AG04449 (cell line): ENCODE measurements at regions of chr9 and their contacts with region 1.

Region 1: GRCh38 chr9:129006328-129007034 is 21.6 kb downstream of the SH3GLB2 start:
- DNase-seq: no peak
- H3K4me3 ChIP-seq: no peak overlapping the region
- CTCF ChIP-seq: peak; percentile 94

Region 2: DNA sequence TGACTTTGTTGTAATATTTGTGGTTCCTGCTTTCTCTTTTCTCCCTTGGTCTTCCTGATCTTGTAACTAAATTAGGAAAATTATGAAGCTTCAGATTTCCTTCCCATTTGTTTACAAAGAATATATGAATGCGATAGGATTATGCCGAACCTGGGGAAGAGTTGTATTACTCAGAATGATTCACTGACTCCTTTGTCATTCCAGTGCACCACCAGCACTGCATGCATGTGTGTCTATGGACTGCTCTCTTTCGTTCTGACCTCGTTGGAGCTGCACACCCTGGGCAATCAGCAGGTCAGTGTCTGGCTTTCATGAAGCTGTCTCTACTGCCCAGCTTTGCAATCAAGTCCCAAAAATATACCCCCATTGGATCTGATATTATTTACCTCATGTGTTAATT is 33.5 kb before region 1 on chr9:
- CTCF ChIA-PET with region 1: interaction called, 10 read pairs
- POLR2A ChIA-PET with region 1: no interaction called
- DNase-seq: no peak
- H3K4me3 ChIP-seq: no peak overlapping the region
- CTCF ChIP-seq: no peak

Region 3: DNA sequence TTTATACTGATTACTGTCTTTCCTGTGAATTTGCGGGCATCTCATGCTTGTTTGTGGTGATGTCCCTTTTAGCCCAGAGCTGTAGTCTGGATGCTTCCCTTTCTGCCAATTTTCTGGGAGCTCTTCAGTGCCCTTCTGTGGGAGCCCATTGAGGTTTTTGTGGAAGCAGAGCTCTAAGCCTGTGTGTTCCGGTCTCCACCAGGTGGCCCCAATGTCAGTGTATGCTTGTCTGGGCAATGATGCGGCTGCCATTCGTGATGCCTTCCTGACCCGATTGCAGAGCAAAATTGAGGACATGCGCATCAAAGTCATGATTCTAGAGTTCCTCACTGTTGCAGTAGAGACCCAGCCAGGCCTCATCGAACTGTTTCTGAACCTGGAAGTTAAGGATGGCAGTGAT is 13.5 kb before region 1 on chr9:
- CTCF ChIA-PET with region 1: interaction called, 178 read pairs
- POLR2A ChIA-PET with region 1: no interaction called
- DNase-seq: no peak
- H3K4me3 ChIP-seq: no peak overlapping the region
- CTCF ChIP-seq: peak; percentile 41

Region 4: DNA sequence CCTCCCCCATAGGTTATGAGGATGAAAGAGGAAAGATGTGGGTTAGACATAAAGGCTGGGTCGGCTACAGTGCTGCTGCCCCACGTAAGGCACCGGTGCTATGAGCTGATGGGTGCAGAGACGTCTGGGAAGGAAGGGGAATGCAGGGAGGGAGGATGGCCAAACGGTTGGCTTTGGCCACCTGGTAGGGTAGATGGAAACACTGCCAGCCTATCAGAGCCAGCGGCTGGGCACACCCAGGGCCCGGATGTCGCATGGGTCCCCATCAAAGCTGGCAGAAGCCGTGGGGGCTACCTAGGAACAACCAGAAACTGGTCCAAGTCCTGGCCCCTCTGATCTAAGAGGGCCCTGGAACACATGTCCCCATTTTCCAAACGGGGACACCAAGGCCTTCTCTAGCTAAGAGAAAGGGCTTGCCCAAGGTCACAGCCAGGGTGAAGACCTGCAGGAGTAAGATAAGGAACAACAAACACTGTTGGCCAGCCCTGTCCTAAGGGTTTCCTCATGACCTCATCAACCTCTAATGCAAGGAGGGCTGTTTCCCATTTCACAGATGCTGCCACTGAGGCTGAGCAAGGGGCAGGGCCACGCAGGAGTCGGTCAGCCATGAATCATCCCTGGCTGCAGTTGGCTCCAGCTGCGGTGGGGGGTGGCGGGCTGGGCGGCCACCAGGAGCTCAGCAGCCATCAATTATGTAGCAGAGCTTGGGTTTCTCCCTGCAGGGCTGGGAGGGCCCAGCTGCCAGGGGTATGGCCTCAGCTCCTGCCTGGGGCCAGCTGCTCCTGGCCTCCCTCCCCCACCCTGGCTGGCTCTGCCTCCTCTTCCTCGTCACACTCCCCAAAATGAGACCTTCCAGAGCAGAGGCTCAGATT is 16.8 kb after region 1 on chr9:
- CTCF ChIA-PET with region 1: interaction called, 98 read pairs
- POLR2A ChIA-PET with region 1: no interaction called
- DNase-seq: no peak
- H3K4me3 ChIP-seq: no peak overlapping the region
- CTCF ChIP-seq: no peak

Region 5: DNA sequence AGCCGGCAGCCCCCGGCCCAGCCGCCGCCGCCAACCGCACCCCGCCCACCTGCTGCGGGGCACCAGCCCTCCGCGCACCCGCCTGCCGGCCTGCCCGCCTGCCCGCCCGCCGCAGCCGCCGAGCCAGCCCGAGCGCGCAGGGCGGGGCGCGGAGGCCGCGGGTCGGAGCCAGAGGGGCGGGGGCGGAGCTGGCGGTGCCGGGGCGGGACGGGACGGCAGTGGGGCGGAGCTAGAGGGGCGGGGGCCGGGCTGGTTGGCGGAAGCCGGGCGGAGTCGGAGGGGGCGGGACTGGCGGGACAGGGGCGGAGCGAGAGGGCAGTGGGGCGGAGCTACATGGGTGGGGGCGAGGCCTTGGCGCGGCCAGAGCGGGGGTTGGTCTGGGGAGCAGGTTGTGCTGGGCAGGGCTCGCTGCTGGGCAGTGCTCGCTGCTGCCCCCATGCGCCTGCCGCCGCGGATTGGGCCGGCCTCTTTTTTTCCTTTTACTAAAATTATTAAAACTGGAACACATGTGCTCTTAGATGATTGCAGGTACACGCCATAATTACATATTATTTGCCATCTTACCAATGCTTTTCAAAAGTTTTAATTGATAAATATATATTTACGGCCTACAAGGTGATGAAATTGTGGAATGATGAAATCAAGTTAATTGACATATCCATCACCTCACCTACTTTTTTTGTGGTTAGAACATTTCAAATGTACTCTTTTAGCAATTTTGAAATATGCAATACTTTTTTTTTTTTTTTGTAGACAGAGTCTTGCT is 21.9 kb after region 1 on chr9 and contains the start of gene SH3GLB2:
- CTCF ChIA-PET with region 1: interaction called, 98 read pairs
- POLR2A ChIA-PET with region 1: no interaction called
- DNase-seq: peak; percentile 59
- H3K4me3 ChIP-seq: peak within 1 kb of the TSS; percentile 77
- CTCF ChIP-seq: peak; percentile 87